Heart right ventricle (tissue), 16 donors: ENCODE measurements at regions of chr20 and their contacts with region 1.

Region 1: GRCh38 chr20:44532259-44532980 is 10.6 kb upstream of the SERINC3 start:
- DNase-seq: peak; percentile 32 to 35
- ATAC-seq: peak in 5 of 8 donors; percentile 6 to 52 (median 42)
- H3K4me3 ChIP-seq: peak overlapping the region; percentile 63 to 96 (median 82)
- H3K27ac ChIP-seq: peak overlapping the region; percentile 60 to 85 (median 80)
- H3K4me1 ChIP-seq: peaks cover 3 to 47% (median 21%) of the 10 kb centered on the region in 9 donors
- H3K27me3 ChIP-seq: peaks cover 0 to 10% (median 0%) of the 10 kb centered on the region in 7 donors
- CTCF ChIP-seq: no peak

Region 2: DNA sequence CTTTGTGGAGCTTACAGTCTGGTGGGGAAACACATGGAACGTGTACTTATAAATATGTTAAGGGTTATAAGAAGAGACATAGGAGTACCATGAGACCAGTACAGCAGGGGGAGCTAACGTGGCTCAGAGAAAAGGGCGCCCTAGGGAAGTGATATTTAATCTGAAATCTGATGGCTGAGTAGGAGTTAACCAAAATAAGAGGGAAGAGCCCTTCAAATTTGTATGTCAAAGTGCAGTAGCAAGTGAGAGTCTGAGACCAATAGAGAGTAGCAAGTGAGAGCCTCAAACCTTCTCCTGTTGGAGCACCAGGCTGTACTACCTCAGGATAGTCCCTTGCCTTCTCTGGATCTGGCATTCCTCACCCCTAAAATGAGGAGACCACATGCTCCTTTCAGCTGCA is 43.9 kb after region 1 on chr20:
- intact Hi-C with region 1: loop called in 2 of 10 experiments (anchors 5 kb)
- DNase-seq: peak in 1 of 2 donors; percentile 52
- ATAC-seq: peak in 5 of 8 donors; percentile 11 to 47 (median 39)
- H3K4me3 ChIP-seq: no peak overlapping the region
- H3K27ac ChIP-seq: peak overlapping the region; percentile 43 to 98 (median 64)
- H3K4me1 ChIP-seq: peaks cover 10 to 90% (median 67%) of the 10 kb centered on the region in 9 donors
- H3K27me3 ChIP-seq: no peaks in the 10 kb centered on the region
- CTCF ChIP-seq: peak; percentile 13 to 71 (median 53)

Region 3: DNA sequence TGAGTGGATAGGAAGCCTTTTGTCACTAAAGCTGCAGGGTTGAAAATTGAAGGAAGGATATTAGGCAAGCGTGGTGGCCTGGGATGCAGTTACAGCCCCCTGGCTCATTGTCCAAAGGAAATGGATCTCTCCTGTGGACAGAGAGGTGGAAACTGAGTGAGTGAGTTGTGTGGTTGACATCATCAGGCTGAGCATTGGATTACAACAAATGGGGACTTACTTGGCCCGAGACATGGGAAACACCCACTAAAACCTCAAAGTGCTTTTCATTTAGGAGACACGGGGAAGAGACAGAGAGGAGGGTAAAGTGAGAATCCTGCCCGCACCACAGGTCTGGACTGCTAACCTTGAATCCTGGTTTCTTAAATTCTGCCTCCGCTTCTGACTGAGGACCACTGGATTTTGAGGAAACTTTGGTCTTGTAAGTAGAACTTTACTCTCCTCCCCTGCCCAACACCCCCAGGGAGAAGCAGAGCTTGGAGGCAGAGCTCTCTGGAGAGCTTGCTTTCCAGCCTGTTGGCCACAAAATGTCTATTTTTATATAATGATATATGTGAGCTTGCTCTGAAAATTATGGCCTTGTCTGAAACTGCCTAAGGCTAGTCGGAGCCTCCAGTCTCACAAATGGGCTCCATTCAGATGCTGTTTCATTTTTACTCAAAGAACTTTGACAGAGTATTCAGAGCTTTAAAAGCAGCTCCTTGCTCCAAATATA is 50.0 kb after region 1 on chr20 and contains the start of gene PKIG:
- intact Hi-C with region 1: loop called in 1 of 10 experiments (anchors 5 kb)
- DNase-seq: peak in 1 of 2 donors; percentile 85
- ATAC-seq: peak; percentile 86 to 93 (median 90)
- H3K4me3 ChIP-seq: peak within 1 kb of the TSS; percentile 36 to 74 (median 62)
- H3K27ac ChIP-seq: peak within 1 kb of the TSS; percentile 87 to 98 (median 92)
- H3K4me1 ChIP-seq: peaks cover 18 to 87% (median 69%) of the 10 kb centered on the region in 9 donors
- H3K27me3 ChIP-seq: no peaks in the 10 kb centered on the region
- CTCF ChIP-seq: peak in 1 of 9 donors; percentile 9
- total RNA-seq, gene PKIG: 155 to 342 (median 231) TPM

Region 4: DNA sequence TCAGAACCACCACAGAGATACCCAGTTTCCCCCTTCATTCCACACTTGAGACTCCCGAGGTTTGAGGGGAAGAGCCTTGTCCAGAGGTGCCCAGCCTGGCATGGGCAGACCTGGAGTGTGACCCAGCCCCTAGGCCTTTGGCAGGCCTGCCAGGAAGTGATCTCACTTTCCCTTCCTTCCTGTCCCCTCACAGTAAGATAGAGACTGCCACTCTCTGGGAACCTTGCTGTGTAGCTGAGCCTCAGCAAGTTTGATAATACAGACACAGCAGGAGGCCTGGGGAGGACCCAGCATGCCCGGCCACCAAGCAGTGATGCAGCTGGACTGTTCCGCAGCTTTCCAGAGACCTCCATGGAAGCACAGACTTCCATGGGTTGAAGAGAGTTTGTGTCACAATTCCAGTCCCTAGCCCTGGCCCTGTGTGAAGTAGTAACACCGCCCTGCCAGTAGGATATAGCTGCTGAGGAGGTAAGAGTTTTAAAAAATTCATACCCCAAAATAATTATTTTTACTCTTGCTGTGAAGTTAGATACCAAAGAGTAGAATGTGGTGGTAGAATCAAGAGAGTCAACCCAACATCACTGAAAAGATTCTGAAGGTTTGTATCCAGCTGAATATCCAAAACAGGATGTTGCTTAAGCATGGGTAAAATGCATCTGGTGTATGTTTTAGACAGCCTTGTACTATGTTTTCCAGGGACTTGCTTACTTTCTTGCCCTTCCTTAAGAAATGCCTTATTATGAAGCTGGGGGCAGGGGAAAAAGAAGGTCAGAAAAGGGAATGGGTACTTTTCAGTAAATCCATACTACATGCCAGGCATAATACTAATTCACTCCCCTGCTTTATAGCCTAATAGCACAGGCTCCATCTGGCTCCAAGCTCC is 66.2 kb after region 1 on chr20:
- intact Hi-C with region 1: loop called in 1 of 10 experiments (anchors 2 kb)
- DNase-seq: peak; percentile 64 to 83
- ATAC-seq: peak; percentile 59 to 77 (median 71)
- H3K4me3 ChIP-seq: peak overlapping the region in 8 of 10 donors; percentile 12 to 49 (median 36)
- H3K27ac ChIP-seq: peak overlapping the region; percentile 55 to 98 (median 92)
- H3K4me1 ChIP-seq: peaks cover 45 to 100% (median 99%) of the 10 kb centered on the region in 9 donors
- H3K27me3 ChIP-seq: no peaks in the 10 kb centered on the region
- CTCF ChIP-seq: peak in 4 of 9 donors; percentile 21 to 38 (median 30)

Region 5: GRCh38 chr20:44683263-44684046 is 151.0 kb after region 1 on chr20:
- intact Hi-C with region 1: loop called in 1 of 10 experiments (anchors 10 kb)
- DNase-seq: no peak
- ATAC-seq: peak in 7 of 8 donors; percentile 43 to 75 (median 54)
- H3K4me3 ChIP-seq: no peak overlapping the region
- H3K27ac ChIP-seq: no peak overlapping the region
- H3K4me1 ChIP-seq: peaks cover 0 to 14% (median 6%) of the 10 kb centered on the region in 9 donors
- H3K27me3 ChIP-seq: peaks cover 0 to 4% (median 0%) of the 10 kb centered on the region in 7 donors
- CTCF ChIP-seq: peak in 8 of 9 donors; percentile 46 to 75 (median 56)